ENCODE measurements at regions of chr15 and their contacts with region 1.

Region 1: GRCh38 chr15:58987489-58988005 is at the start of gene RNF111:
- DNase-seq: peak; percentile 77 to 97 (median 84)

Region 2: DNA sequence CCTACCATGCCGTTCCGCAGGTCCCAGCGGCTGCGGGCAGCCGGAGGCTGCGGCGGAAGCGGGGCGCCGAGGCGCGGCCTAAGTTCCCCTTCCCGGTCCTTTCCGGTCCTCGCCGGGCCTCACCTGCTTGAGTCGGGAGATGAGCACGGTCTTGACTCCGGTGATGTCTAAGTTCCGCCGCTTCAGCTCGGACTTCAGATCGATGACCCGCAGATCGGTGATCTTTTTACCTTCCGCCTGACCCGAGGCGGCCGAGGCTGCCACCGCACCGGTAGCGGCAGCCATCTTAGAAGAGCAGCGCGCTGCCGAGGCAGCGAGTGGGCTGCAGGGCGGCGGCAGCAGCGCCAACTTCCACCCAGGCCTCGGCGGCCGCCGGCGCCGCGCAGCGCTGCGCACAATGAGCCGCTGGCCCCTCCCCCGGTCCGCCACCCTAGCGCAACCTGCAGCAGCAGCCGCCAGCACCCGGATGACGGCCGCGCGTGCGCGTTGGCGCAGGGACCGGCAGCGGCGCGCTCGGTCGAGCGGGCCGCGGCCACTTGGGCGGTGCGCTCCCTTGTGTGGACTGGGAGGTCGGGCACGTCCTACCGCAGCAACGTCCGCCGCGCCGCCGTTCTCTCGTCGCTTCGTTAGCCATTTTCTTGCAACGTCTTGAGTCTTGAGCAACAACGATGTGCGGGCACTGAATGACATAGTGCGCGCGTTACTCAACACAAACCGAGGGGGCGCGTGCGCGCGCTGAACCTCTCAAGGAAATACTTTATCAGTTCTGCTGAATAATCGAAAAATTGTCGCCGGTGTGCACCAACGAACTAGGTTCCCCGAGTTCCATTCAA is 54.0 kb before region 1 on chr15 and contains the start of gene SLTM:
- intact Hi-C with region 1: loop called (anchors 2 kb)
- DNase-seq: peak; percentile 75 to 98 (median 88)

Region 3: GRCh38 chr15:59104912-59105732 is 117.6 kb after region 1 on chr15 and contains the start of gene CCNB2:
- intact Hi-C with region 1: loop called (anchors 10 kb)
- DNase-seq: peak; percentile 71 to 97 (median 83)

Region 4: DNA sequence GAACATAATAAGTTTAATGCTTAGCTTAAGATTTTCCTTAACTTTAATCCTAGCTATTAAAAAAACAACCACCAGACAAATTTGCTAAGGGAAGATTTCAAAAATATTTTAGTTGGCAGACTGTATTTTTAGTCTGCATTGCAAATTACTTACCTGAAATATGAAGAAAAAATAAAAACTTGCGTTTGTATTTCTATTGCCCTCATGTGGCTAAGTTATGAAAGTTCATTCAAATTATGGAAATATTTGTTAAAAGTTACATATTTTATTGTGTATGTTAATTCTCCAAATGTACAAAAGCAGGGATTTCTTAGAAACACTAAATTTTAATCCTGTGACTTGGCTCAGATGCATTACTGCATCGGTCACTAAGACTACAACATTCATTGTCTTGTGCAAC is 654.8 kb after region 1 on chr15:
- intact Hi-C with region 1: no loop called
- DNase-seq: no peak

Measured in posterior cingulate gyrus (tissue), 11 donors.